ENCODE measurements at regions of chr9 and their contacts with region 1.

Region 1: DNA sequence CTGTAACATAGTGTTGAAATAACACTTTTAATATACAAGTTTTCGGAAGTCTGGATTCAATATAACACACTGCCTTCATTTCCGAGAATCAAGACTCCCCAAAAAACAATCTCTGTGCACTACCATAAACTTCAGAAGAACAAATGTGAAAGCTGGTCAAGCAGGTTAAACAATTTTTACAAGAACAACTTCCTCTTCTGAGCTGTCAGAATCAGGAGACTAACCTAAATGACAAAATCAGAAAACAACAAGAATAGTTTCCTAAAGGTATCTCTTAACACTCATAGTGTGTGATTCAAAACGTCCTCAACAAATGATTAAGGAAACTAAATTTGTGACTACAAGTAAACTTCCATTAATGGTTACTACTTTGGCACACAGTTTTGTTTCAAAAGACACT is 11.6 kb downstream of the C9orf72 start:
- DNase-seq: no peak
- H3K4me3 ChIP-seq: no peak overlapping the region
- H3K27ac ChIP-seq: no peak overlapping the region
- H3K27me3 ChIP-seq: no peaks in the 10 kb centered on the region
- CTCF ChIP-seq: no peak

Region 2: GRCh38 chr9:27413506-27414219 is 148.0 kb before region 1 on chr9:
- CTCF ChIA-PET with region 1: interaction called, 13 read pairs
- POLR2A ChIA-PET with region 1: no interaction called
- DNase-seq: no peak
- H3K4me3 ChIP-seq: peak overlapping the region; percentile 20; the same call in 1 of the 2 replicates
- H3K27ac ChIP-seq: no peak overlapping the region
- H3K27me3 ChIP-seq: no peaks in the 10 kb centered on the region
- CTCF ChIP-seq: no peak

Region 3: GRCh38 chr9:27539479-27540441 is 21.9 kb before region 1 on chr9:
- CTCF ChIA-PET with region 1: no interaction called
- POLR2A ChIA-PET with region 1: no interaction called
- DNase-seq: peak; percentile 51
- H3K4me3 ChIP-seq: no peak overlapping the region
- H3K27ac ChIP-seq: peak overlapping the region; percentile 80
- H3K27me3 ChIP-seq: no peaks in the 10 kb centered on the region
- CTCF ChIP-seq: no peak

Region 4: GRCh38 chr9:27581826-27582225 is 20.1 kb after region 1 on chr9:
- CTCF ChIA-PET with region 1: no interaction called
- POLR2A ChIA-PET with region 1: no interaction called
- DNase-seq: no peak
- H3K4me3 ChIP-seq: no peak overlapping the region
- H3K27ac ChIP-seq: no peak overlapping the region
- H3K27me3 ChIP-seq: no peaks in the 10 kb centered on the region
- CTCF ChIP-seq: no peak